Ovary (tissue), 10 donors: ENCODE measurements at regions of chr5 and their contacts with region 1.

Region 1: DNA sequence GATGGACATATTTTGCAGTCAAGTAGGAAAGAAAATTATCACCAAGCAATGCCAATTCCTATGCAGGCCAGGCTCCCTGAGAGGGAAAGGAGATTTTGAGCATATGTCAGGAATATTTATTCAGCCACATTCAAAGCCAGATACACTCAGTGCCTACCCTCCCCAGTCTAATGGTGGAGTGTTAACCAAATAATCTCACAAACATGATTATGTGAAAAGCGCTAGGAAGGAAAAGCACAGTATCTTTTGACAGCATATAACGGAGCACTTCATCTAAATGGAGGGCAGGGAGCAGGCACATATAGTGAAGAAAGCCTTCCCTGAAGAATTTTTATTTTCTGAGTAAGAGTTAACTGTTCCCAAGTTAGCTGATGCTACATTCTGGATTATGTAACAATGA is 80.3 kb upstream of the SLC30A5 start:
- DNase-seq: no peak
- H3K4me3 ChIP-seq: no peak overlapping the region
- H3K27ac ChIP-seq: no peak overlapping the region
- H3K4me1 ChIP-seq: no peaks in the 10 kb centered on the region
- H3K27me3 ChIP-seq: no peaks in the 10 kb centered on the region
- CTCF ChIP-seq: no peak
- EP300 ChIP-seq: no peak
- POLR2A ChIP-seq: no peak

Region 2: GRCh38 chr5:68411161-68411560 is 602.3 kb before region 1 on chr5:
- intact Hi-C with region 1: loop called in 1 of 4 experiments (anchors 5 kb)
- DNase-seq: no peak
- H3K4me3 ChIP-seq: no peak overlapping the region
- H3K27ac ChIP-seq: no peak overlapping the region
- H3K4me1 ChIP-seq: peaks cover 1% of the 10 kb centered on the region
- H3K27me3 ChIP-seq: no peaks in the 10 kb centered on the region
- CTCF ChIP-seq: no peak
- EP300 ChIP-seq: no peak
- POLR2A ChIP-seq: no peak

Region 3: GRCh38 chr5:68460147-68460798 is 553.2 kb before region 1 on chr5:
- intact Hi-C with region 1: no loop called
- DNase-seq: peak in 1 of 5 donors; percentile 44
- H3K4me3 ChIP-seq: no peak overlapping the region
- H3K27ac ChIP-seq: no peak overlapping the region
- H3K4me1 ChIP-seq: peaks cover 4% of the 10 kb centered on the region
- H3K27me3 ChIP-seq: no peaks in the 10 kb centered on the region
- CTCF ChIP-seq: peak in 2 of 3 donors; percentile 23 to 55
- EP300 ChIP-seq: no peak
- POLR2A ChIP-seq: no peak